ENCODE measurements at regions of chr1 and their contacts with region 1.

Region 1: DNA sequence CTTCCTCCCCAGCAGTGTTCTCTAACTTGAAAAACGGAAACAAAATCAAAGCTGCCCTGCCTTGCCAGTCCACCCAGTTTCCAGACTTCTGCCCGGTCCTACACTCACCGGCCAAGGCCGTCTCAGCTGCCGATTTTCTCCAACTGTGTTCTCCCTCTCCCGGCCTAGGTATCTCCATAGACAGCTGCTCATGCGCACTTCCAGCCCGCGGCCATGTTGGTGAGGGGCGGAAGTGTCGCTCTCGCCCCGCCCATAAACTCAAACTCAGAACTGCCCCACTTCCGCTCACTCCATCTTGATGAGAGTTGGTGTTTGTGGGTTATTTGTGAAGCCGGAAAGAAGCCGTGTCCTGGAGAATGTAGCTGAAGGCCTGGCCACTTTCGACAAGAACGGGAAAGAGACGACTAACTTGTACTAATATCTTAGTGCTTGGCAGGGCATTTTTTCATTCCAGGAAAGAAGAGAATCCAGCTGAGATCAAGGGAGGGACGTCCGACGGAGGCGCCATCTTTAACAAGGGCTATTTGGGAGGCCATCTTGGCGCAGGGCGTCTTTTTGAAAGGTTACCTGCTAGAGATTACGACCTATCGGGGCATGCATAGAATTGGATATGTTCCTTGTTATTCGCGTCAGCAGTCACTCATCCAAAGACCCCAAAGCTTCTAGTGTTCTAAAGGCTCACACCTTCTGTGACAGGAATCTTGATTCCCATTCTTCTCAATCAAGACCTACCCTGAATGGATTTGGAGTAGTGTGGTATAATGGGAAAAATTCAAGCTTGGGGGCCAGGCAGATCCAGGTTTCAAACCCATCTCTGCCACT is at the start of gene USF1:
- DNase-seq: peak; percentile 92
- ATAC-seq: peak; percentile 86
- H3K4me3 ChIP-seq: peak within 1 kb of the TSS; percentile 90
- H3K27ac ChIP-seq: peak within 1 kb of the TSS; percentile 100
- H3K4me1 ChIP-seq: peaks cover 15% of the 10 kb centered on the region
- H3K27me3 ChIP-seq: no peaks in the 10 kb centered on the region
- CTCF ChIP-seq: no peak
- EP300 ChIP-seq: no peak
- POLR2A ChIP-seq: peak; percentile 90
- RAD21 ChIP-seq: no peak
- polyA plus RNA-seq, gene USF1: 9.4 to 26.3 TPM

Region 2: GRCh38 chr1:160925652-160926241 is 120.2 kb before region 1 on chr1:
- CTCF ChIA-PET with region 1: no interaction called
- POLR2A ChIA-PET with region 1: no interaction called
- RAD21 ChIA-PET with region 1: no interaction called
- SMC1A ChIA-PET with region 1: no interaction called
- in situ Hi-C with region 1: no loop called
- intact Hi-C with region 1: no loop called
- DNase-seq: no peak
- ATAC-seq: no peak
- H3K4me3 ChIP-seq: no peak overlapping the region
- H3K27ac ChIP-seq: no peak overlapping the region
- H3K4me1 ChIP-seq: no peaks in the 10 kb centered on the region
- H3K27me3 ChIP-seq: no peaks in the 10 kb centered on the region
- CTCF ChIP-seq: no peak
- EP300 ChIP-seq: no peak
- POLR2A ChIP-seq: no peak
- RAD21 ChIP-seq: no peak

Region 3: GRCh38 chr1:161013488-161014230 is 32.3 kb before region 1 on chr1:
- CTCF ChIA-PET with region 1: interaction called, 14 read pairs
- POLR2A ChIA-PET with region 1: interaction called, 31 read pairs
- RAD21 ChIA-PET with region 1: interaction called, 12 read pairs
- SMC1A ChIA-PET with region 1: interaction called, 11 read pairs
- in situ Hi-C with region 1: no loop called
- intact Hi-C with region 1: loop called (anchors 1 kb)
- DNase-seq: peak; percentile 74
- ATAC-seq: peak; percentile 92
- H3K4me3 ChIP-seq: peak overlapping the region; percentile 65
- H3K27ac ChIP-seq: peak overlapping the region; percentile 97
- H3K4me1 ChIP-seq: peaks cover 28% of the 10 kb centered on the region
- H3K27me3 ChIP-seq: no peaks in the 10 kb centered on the region
- CTCF ChIP-seq: no peak
- EP300 ChIP-seq: peak in 1 of 2 experiments; percentile 39; a peak in 1 of 4 replicates
- POLR2A ChIP-seq: peak; percentile 74
- RAD21 ChIP-seq: no peak

Region 4: GRCh38 chr1:161021165-161021960 is 24.6 kb before region 1 on chr1:
- CTCF ChIA-PET with region 1: interaction called, 15 read pairs
- POLR2A ChIA-PET with region 1: interaction called, 36 read pairs
- RAD21 ChIA-PET with region 1: interaction called, 10 read pairs
- SMC1A ChIA-PET with region 1: interaction called, 18 read pairs
- in situ Hi-C with region 1: no loop called
- intact Hi-C with region 1: no loop called
- DNase-seq: peak; percentile 66
- ATAC-seq: peak; percentile 96
- H3K4me3 ChIP-seq: peak overlapping the region; percentile 75
- H3K27ac ChIP-seq: peak overlapping the region; percentile 33
- H3K4me1 ChIP-seq: peaks cover 19% of the 10 kb centered on the region
- H3K27me3 ChIP-seq: no peaks in the 10 kb centered on the region
- CTCF ChIP-seq: no peak
- EP300 ChIP-seq: no peak
- POLR2A ChIP-seq: peak; percentile 69; the same call in 1 of the 2 replicates
- RAD21 ChIP-seq: no peak

Region 5: GRCh38 chr1:161117759-161118581 is 72.0 kb after region 1 on chr1 and contains the starts of genes NIT1 and PFDN2:
- CTCF ChIA-PET with region 1: no interaction called
- POLR2A ChIA-PET with region 1: interaction called, 4 read pairs
- RAD21 ChIA-PET with region 1: interaction called, 8 read pairs
- SMC1A ChIA-PET with region 1: interaction called, 3 read pairs
- in situ Hi-C with region 1: no loop called
- intact Hi-C with region 1: loop called (anchors 5 kb)
- DNase-seq: peak; percentile 38
- ATAC-seq: peak; percentile 87
- H3K4me3 ChIP-seq: peak within 1 kb of the TSS; percentile 74
- H3K27ac ChIP-seq: peak within 1 kb of the TSS; percentile 90
- H3K4me1 ChIP-seq: peaks cover 19% of the 10 kb centered on the region
- H3K27me3 ChIP-seq: no peaks in the 10 kb centered on the region
- CTCF ChIP-seq: no peak; a peak in 1 of 6 replicates
- EP300 ChIP-seq: no peak
- POLR2A ChIP-seq: peak; percentile 99
- RAD21 ChIP-seq: no peak
- polyA plus RNA-seq, gene NIT1: 43.1 to 54.4 TPM
- polyA plus RNA-seq, gene PFDN2: 30.0 to 59.6 TPM

Region 6: DNA sequence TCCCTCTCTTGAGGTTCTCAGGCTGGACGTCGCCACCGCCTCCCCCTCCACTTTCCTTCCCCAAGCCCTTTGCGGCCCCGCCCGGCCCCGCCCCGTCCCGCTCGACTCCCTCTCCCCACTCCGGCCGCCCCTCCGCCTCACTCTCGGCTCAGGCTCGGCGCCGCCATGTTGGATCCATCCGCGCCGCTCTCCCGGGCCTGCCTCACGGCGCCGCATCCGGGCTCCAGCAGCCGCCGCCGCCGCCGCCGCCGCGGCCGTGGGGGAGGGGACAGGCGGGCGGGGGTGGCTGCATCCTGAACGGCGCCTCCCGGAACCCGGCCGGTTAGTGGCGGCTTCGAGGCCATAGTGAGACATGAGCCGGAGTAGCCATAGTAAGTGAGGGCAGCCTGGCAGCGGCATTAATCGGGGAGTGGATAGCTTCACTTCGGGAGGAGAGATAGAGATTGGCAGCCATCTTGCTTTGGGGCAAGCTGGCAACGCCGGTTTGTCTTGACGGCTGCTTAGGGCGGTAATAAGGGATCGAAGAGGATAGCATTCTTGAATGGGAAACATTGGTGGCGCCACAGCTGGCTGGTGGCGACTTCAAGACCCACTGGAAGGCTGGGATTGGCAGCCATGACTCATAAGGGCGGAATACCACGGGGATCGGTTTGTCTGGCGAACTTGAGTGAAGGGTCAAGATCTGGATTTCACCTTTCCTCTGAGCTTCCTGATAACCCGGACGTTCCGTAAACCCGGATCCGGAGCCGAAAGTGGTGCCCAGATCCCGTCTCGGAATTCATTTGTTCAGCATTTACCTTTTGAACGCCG is 86.7 kb after region 1 on chr1 and contains the start of gene DEDD:
- CTCF ChIA-PET with region 1: interaction called, 32 read pairs
- POLR2A ChIA-PET with region 1: interaction called, 14 read pairs
- RAD21 ChIA-PET with region 1: interaction called, 11 read pairs
- SMC1A ChIA-PET with region 1: interaction called, 19 read pairs
- in situ Hi-C with region 1: no loop called
- intact Hi-C with region 1: no loop called
- DNase-seq: peak; percentile 87
- ATAC-seq: peak; percentile 98
- H3K4me3 ChIP-seq: peak within 1 kb of the TSS; percentile 93
- H3K27ac ChIP-seq: peak within 1 kb of the TSS; percentile 79
- H3K4me1 ChIP-seq: peaks cover 3% of the 10 kb centered on the region
- H3K27me3 ChIP-seq: no peaks in the 10 kb centered on the region
- CTCF ChIP-seq: no peak
- EP300 ChIP-seq: peak in 1 of 2 experiments; percentile 51; a peak in 2 of 4 replicates
- POLR2A ChIP-seq: peak; percentile 85
- RAD21 ChIP-seq: no peak
- polyA plus RNA-seq, gene DEDD: 25.5 to 30.0 TPM